Natural killer cell (primary cell): ENCODE measurements at regions of chr14 and their contacts with region 1.

Region 1: DNA sequence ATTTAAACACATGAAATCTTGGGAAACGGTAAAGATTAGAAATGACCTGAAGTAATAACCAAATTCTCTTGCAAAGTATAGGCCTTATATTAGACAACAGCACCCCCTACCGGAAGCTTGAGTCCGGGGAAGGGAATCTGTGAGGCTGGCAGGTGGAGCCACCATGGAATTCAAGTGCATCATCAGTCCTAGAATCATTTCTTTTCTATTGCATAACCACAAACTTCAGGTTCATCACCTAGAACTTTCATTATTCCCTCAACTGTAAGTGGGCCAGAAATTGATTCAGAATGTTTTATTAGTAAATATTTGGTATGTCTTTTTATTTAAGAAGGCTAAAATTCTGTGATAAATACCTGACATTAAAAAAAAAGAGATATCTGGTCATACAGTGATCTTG is 48.5 kb downstream of the AP5M1 start:
- DNase-seq: peak; percentile 47 to 86
- ATAC-seq: peak; percentile 67 to 76 (median 76)
- H3K4me3 ChIP-seq: no peak overlapping the region
- H3K4me3 Mint-ChIP-seq: no peak overlapping the region
- H3K27ac ChIP-seq: no peak overlapping the region
- H3K27ac Mint-ChIP-seq: no peak overlapping the region
- H3K4me1 ChIP-seq: no peaks in the 10 kb centered on the region
- H3K4me1 Mint-ChIP-seq: peaks cover 6% of the 10 kb centered on the region in 2 donors
- H3K27me3 ChIP-seq: peaks cover 3% of the 10 kb centered on the region
- H3K27me3 Mint-ChIP-seq: peaks cover 0 to 12% of the 10 kb centered on the region in 2 donors
- CTCF ChIP-seq: peak; percentile 88

Region 2: DNA sequence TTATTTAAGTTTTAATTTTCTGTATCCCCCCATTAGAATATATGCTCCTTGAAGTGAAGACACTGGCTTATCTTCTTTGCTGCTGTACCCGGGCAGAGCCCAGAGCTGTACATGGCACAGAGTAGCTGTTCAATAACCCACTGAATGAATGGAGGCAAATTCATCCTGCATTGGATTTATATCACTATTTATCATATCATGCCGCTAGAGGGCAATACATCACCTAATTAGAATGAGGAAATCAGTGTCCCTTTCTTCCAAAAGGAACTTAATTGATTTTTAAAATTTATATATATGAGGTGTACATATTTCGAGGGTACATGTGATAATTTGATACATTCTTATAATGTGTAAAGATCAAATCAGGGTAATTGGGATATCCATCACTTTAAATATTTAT is 826.9 kb before region 1 on chr14:
- intact Hi-C with region 1: loop called (anchors 1 kb)
- DNase-seq: peak in 1 of 2 donors; percentile 57
- ATAC-seq: peak in 1 of 3 donors; percentile 30
- H3K4me3 ChIP-seq: no peak overlapping the region
- H3K4me3 Mint-ChIP-seq: no peak overlapping the region
- H3K27ac ChIP-seq: no peak overlapping the region
- H3K27ac Mint-ChIP-seq: no peak overlapping the region
- H3K4me1 ChIP-seq: peaks cover 6% of the 10 kb centered on the region
- H3K4me1 Mint-ChIP-seq: no peaks in the 10 kb centered on the region
- H3K27me3 ChIP-seq: no peaks in the 10 kb centered on the region
- H3K27me3 Mint-ChIP-seq: peaks cover 9 to 20% of the 10 kb centered on the region in 2 donors
- CTCF ChIP-seq: peak; percentile 81

Region 3: DNA sequence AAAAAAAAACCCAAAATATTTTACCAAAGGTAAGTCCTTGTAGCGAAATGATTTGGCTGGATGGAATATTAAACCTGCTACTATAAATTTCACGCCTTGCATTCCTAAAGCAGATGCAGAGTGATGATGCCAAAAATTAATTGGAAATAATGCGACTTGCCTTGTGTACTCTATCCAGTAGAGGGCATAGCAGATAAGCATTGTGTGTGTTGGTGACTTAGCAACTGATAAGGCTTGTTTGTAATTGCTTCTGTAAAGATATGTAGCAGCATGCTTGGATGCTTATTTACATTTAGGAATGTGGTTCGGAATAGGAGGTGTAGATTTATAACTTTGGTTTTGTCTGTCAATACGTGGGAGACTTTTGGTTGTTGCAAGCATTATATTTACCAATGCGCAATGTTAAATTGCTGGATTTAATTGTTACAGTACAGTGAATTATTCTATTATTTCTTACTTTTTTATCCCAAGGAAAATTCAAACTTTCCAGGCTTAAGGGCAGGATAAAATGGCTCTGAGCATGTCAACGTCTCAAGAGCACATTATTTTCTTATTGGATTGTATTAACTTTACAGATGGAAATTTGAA is 657.3 kb before region 1 on chr14:
- intact Hi-C with region 1: loop called (anchors 1 kb)
- DNase-seq: peak in 1 of 2 donors; percentile 15
- ATAC-seq: no peak
- H3K4me3 ChIP-seq: no peak overlapping the region
- H3K4me3 Mint-ChIP-seq: no peak overlapping the region
- H3K27ac ChIP-seq: no peak overlapping the region
- H3K27ac Mint-ChIP-seq: no peak overlapping the region
- H3K4me1 ChIP-seq: no peaks in the 10 kb centered on the region
- H3K4me1 Mint-ChIP-seq: no peaks in the 10 kb centered on the region
- H3K27me3 ChIP-seq: no peaks in the 10 kb centered on the region
- H3K27me3 Mint-ChIP-seq: peaks cover 0 to 3% of the 10 kb centered on the region in 2 donors
- CTCF ChIP-seq: no peak

Region 4: DNA sequence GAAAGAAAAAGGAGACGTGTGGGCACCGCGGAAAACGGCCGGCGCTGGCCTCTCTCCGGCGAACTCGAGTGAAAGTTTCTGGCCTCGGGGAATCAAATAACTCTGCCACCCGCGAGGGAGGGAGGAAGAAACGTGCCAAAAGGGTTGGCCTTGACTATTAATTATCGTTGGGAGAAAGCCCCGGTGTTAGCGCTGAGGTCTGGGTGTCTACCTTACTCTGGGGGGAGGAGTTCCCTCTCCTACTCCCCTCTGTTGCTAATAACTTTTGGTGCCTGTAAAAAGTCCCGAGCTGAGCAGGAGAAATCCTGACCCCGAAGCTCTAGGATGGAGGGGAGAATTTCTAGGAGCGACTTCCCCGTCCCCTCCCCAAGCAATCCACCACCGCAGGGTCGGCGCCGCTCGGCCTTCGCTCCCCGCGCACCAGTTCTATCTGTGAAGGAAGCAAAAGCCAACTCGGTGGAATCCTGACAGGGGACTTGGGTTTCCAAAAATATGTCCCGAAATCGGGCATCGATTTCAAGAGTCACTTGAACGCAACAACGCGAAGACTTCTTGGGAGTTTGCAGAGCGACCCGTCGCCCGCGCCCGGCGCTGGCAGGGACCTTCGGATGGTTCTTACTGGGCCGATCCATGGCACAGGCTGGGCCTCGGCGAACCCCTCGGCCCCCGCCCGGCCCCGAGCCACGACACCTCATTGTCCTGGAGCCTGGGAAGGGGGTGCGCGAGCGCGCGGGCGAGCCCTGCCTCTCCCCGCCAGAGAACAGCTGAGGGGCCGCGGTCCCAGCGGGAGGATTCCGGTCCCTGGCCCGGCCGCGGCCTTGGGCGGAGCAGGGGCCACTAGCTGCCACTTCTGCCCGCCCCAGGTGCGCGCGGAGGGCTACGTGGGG is 508.7 kb before region 1 on chr14:
- intact Hi-C with region 1: no loop called
- DNase-seq: no peak
- ATAC-seq: no peak
- H3K4me3 ChIP-seq: no peak overlapping the region
- H3K4me3 Mint-ChIP-seq: no peak overlapping the region
- H3K27ac ChIP-seq: no peak overlapping the region
- H3K27ac Mint-ChIP-seq: no peak overlapping the region
- H3K4me1 ChIP-seq: no peaks in the 10 kb centered on the region
- H3K4me1 Mint-ChIP-seq: peaks cover 4 to 13% of the 10 kb centered on the region in 2 donors
- H3K27me3 ChIP-seq: peaks cover 70% of the 10 kb centered on the region
- H3K27me3 Mint-ChIP-seq: peaks cover 74 to 88% of the 10 kb centered on the region in 2 donors
- CTCF ChIP-seq: no peak

Region 5: GRCh38 chr14:57232006-57232405 is 85.3 kb before region 1 on chr14:
- intact Hi-C with region 1: no loop called
- DNase-seq: no peak
- ATAC-seq: no peak
- H3K4me3 ChIP-seq: no peak overlapping the region
- H3K4me3 Mint-ChIP-seq: no peak overlapping the region
- H3K27ac ChIP-seq: no peak overlapping the region
- H3K27ac Mint-ChIP-seq: no peak overlapping the region
- H3K4me1 ChIP-seq: no peaks in the 10 kb centered on the region
- H3K4me1 Mint-ChIP-seq: no peaks in the 10 kb centered on the region
- H3K27me3 ChIP-seq: no peaks in the 10 kb centered on the region
- H3K27me3 Mint-ChIP-seq: no peaks in the 10 kb centered on the region
- CTCF ChIP-seq: no peak

Region 6: GRCh38 chr14:57244106-57244505 is 73.2 kb before region 1 on chr14:
- intact Hi-C with region 1: no loop called
- DNase-seq: no peak
- ATAC-seq: no peak
- H3K4me3 ChIP-seq: no peak overlapping the region
- H3K4me3 Mint-ChIP-seq: no peak overlapping the region
- H3K27ac ChIP-seq: no peak overlapping the region
- H3K27ac Mint-ChIP-seq: no peak overlapping the region
- H3K4me1 ChIP-seq: no peaks in the 10 kb centered on the region
- H3K4me1 Mint-ChIP-seq: peaks cover 5 to 7% of the 10 kb centered on the region in 2 donors
- H3K27me3 ChIP-seq: no peaks in the 10 kb centered on the region
- H3K27me3 Mint-ChIP-seq: no peaks in the 10 kb centered on the region
- CTCF ChIP-seq: no peak